GM18951 (cell line): ENCODE measurements at regions of chr13 and their contacts with region 1.

Region 1: DNA sequence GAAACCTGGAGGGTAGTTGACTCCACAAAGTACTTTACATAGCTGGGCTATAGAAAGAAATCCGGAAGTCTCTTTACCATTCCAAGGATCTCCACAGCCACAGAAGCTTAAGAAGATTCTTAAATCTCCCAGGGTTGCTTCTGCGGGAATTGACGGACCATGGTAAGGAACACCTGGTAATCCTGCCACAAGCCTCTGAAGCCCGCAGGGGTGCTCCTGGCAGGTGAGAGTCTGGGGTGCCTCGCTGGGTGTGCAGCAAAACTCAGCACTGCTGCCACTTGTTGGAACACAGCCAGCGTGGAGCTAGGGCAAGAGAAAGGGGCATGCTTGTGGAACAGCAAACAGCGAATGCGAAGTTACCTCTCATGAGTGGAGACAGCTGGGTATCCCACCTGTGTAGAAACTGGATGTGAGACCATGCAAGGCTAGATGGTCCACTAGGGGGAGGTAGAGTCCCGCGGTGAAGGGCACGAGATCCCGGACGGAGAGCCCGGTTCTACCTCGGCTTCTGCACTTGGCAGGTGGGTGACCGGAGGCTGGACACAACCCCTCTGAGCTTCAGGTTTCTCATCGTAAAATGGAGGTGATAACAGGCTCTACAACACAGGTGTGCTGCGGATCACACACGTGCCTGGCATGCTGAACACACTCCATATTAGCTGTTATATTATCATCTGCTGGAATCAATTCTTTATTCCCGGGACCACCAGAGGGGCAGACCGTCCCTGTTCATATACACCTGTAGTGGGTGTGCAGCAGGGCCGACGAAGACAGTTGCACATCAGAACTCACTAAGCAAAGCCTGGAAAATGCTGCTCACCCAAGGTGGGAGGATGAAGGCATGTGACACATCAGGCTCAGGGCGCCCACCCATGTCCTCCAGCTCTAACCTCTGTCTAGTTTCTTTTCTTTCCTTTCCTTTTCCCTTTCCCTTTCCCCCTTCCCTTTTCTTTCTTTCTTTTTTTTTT is 24.1 kb upstream of the UBAC2 start:
- POLR2A ChIP-seq: no peak

Region 2: GRCh38 chr13:99264051-99264450 is 87.5 kb after region 1 on chr13:
- in situ Hi-C with region 1: loop called (anchors 5 kb)
- POLR2A ChIP-seq: no peak

Region 3: GRCh38 chr13:99442273-99442895 is 265.8 kb after region 1 on chr13:
- in situ Hi-C with region 1: loop called (anchors 10 kb)
- POLR2A ChIP-seq: no peak